H1 (cell line): ENCODE measurements at regions of chr19 and their contacts with region 1.

Region 1: DNA sequence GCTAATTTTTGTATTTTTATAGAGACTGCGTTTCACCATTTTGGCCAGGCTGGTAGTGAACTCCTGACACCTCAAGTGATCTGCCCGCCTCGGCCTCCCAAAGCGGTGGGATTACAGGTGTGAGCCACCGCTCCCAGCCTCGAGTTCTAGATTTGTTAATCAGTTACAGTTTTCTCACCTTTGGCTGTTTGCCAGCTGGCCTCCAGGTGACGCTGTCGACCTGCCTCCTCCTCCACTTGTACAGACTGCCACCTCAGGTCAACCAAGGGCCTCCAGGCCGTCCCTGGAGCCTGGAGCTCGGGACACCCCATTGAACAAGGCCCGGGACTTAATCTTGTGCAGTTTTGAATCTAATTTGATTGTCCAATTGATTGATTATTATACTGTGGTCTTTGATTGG is 45.5 kb downstream of the IER2 start:
- DNase-seq: peak; percentile 47 to 86
- H3K4me3 ChIP-seq: no peak overlapping the region
- H3K27ac ChIP-seq: no peak overlapping the region
- H3K4me1 ChIP-seq: no peaks in the 10 kb centered on the region; a peak in 2 of 7 replicates
- H3K27me3 ChIP-seq: no peaks in the 10 kb centered on the region
- CTCF ChIP-seq: peak; percentile 94 to 99 (median 97)
- EP300 ChIP-seq: no peak
- POLR2A ChIP-seq: no peak
- RAD21 ChIP-seq: peak; percentile 92 to 93

Region 2: GRCh38 chr19:13007292-13008045 is 188.2 kb before region 1 on chr19:
- CTCF ChIA-PET with region 1: no interaction called
- POLR2A ChIA-PET with region 1: no interaction called
- DNase-seq: no peak
- H3K4me3 ChIP-seq: no peak overlapping the region
- H3K27ac ChIP-seq: no peak overlapping the region
- H3K4me1 ChIP-seq: peaks cover 4 to 28% (median 16%) of the 10 kb centered on the region in 4 experiments
- H3K27me3 ChIP-seq: peaks cover 52 to 96% (median 87%) of the 10 kb centered on the region in 4 experiments
- CTCF ChIP-seq: peak in 1 of 3 experiments; percentile 10; a peak in 1 of 4 replicates
- EP300 ChIP-seq: no peak
- POLR2A ChIP-seq: no peak
- RAD21 ChIP-seq: no peak

Region 3: DNA sequence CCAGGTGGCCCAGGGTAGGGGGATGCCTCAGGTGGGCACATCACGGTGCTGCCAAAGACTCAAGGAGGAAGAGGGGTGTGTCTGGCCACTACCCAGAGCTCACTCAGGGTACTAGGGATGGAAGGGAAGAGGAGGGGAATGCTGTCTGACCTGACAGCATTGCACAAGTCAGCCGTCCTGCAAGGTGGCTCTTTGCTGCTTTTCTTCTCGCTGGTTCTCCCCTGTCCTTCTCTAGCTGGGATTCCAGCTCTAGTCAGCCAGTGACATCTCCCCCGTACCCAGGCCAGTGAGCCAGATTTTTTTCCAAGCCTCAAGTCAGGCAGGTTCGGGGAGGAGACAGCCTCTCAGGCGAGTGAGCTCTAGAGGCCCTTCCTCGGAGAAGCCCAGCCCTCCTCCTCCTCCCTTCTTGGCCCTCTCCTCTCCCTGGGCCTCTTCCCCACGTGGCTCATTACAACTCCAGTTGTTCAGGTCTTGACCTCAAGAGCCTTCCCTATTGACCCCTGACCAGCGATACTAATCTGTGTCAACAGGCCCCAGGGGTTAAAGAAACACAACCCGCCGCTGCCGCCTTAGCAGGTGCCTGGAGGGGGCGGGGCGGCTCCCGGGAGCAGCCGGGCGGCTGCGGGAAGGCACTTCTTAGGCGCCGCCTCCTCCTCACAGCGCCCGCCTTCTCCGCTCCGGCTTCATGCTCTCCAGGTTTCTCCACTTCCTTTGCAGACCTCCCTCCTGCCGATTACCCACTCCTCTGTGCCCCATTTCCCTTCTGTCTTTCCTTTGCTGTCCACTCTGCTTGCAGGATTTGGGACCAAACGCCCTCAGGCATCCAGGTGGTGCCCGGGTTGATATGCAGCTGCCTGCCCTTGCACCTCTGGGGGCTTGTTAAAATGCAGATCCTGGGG is 144.2 kb before region 1 on chr19:
- CTCF ChIA-PET with region 1: no interaction called
- POLR2A ChIA-PET with region 1: no interaction called
- DNase-seq: peak in 1 of 2 experiments; percentile 85
- H3K4me3 ChIP-seq: peak overlapping the region in 2 of 4 experiments; percentile 7 to 17; a peak in 3 of 8 replicates
- H3K27ac ChIP-seq: no peak overlapping the region
- H3K4me1 ChIP-seq: peaks cover 7 to 38% (median 35%) of the 10 kb centered on the region in 4 experiments
- H3K27me3 ChIP-seq: peaks cover 79 to 100% (median 95%) of the 10 kb centered on the region in 4 experiments
- CTCF ChIP-seq: no peak
- EP300 ChIP-seq: peak in 1 of 2 experiments; percentile 84; a peak in 1 of 3 replicates
- POLR2A ChIP-seq: no peak
- RAD21 ChIP-seq: no peak

Region 4: GRCh38 chr19:13162518-13163314 is 33.0 kb before region 1 on chr19:
- CTCF ChIA-PET with region 1: interaction called, 41 read pairs
- POLR2A ChIA-PET with region 1: interaction called, 29 read pairs
- DNase-seq: peak; percentile 92 to 96
- H3K4me3 ChIP-seq: peak overlapping the region; percentile 13 to 62 (median 46); a peak in 7 of 8 replicates
- H3K27ac ChIP-seq: peak overlapping the region; percentile 95
- H3K4me1 ChIP-seq: peaks cover 16 to 31% (median 18%) of the 10 kb centered on the region in 4 experiments
- H3K27me3 ChIP-seq: no peaks in the 10 kb centered on the region
- CTCF ChIP-seq: no peak
- EP300 ChIP-seq: no peak
- POLR2A ChIP-seq: peak; percentile 17 to 66; a peak in 2 of 3 replicates
- RAD21 ChIP-seq: no peak; a peak in 1 of 4 replicates

Region 5: DNA sequence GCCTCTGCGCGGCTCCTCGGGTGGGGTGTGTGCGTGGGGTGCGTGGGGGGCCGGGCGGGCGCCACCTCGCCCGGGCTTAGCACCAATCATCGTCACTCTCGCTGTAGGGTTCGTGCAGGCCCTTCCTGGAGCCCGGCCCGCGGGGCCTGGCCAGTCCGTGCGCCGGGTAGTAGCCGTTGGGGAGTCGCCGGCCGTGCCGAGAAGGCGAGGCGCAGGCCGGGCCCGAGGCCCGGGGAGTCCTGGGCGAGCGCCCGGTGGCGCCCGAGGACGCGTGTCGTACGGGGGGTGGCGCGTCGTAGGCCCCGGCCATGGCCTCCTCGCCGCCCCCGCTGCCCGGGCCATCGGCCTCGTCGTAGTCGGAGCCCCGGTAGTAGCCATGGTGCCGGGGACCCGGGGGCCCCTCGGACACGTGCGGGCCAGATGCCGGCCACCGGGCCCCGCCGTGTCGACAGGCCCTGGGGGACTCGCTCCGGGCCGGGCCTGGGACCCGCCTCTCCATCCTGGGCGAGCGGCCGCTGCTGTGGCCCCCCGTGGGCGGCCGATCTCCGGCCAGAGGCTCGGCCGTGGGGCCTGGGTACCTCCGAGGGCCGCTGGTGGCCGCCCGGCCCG is 11.7 kb after region 1 on chr19:
- CTCF ChIA-PET with region 1: interaction called, 89 read pairs
- POLR2A ChIA-PET with region 1: interaction called, 3 read pairs
- DNase-seq: peak in 1 of 2 experiments; percentile 66
- H3K4me3 ChIP-seq: no peak overlapping the region
- H3K27ac ChIP-seq: no peak overlapping the region
- H3K4me1 ChIP-seq: peaks cover 0 to 10% (median 5%) of the 10 kb centered on the region in 4 experiments; a peak in 4 of 7 replicates
- H3K27me3 ChIP-seq: no peaks in the 10 kb centered on the region
- CTCF ChIP-seq: no peak
- EP300 ChIP-seq: no peak
- POLR2A ChIP-seq: no peak
- RAD21 ChIP-seq: no peak

Region 6: GRCh38 chr19:13234518-13234917 is 38.8 kb after region 1 on chr19:
- CTCF ChIA-PET with region 1: interaction called, 20 read pairs
- POLR2A ChIA-PET with region 1: no interaction called
- DNase-seq: peak; percentile 31 to 85
- H3K4me3 ChIP-seq: no peak overlapping the region
- H3K27ac ChIP-seq: no peak overlapping the region
- H3K4me1 ChIP-seq: peaks cover 0 to 7% (median 3%) of the 10 kb centered on the region in 4 experiments; a peak in 4 of 7 replicates
- H3K27me3 ChIP-seq: no peaks in the 10 kb centered on the region
- CTCF ChIP-seq: peak; percentile 91 to 99 (median 96)
- EP300 ChIP-seq: no peak
- POLR2A ChIP-seq: no peak
- RAD21 ChIP-seq: peak; percentile 57

Region 7: DNA sequence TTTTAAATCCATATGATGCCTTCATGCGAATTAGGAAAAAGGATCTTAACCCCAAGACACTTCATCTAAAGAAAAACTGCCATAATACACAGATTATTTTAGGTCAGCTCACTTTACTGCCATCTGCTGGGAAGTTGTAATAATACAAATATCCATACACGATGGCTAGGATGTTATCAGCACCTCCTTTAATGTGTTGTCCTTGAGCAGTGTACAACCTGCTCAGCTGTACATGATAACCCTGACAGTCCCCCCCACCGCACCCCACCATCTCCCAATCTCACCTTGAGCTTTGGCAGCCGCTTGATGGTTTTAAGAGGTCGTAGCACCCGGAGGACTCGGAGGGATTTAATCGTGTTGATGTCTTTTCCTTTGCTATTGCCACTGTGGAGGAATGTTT is 66.8 kb after region 1 on chr19:
- CTCF ChIA-PET with region 1: interaction called, 40 read pairs
- POLR2A ChIA-PET with region 1: interaction called, 3 read pairs
- DNase-seq: no peak
- H3K4me3 ChIP-seq: no peak overlapping the region
- H3K27ac ChIP-seq: no peak overlapping the region
- H3K4me1 ChIP-seq: no peaks in the 10 kb centered on the region
- H3K27me3 ChIP-seq: no peaks in the 10 kb centered on the region
- CTCF ChIP-seq: peak in 2 of 3 experiments; percentile 12 to 49; a peak in 2 of 4 replicates
- EP300 ChIP-seq: no peak
- POLR2A ChIP-seq: no peak
- RAD21 ChIP-seq: peak; percentile 27 to 40; a peak in 3 of 4 replicates